ENCODE measurements at regions of chr2 and their contacts with region 1.

Region 1: GRCh38 chr2:217886720-217887309 is 116.0 kb downstream of the TNS1 start:
- DNase-seq: no peak
- H3K4me3 ChIP-seq: no peak overlapping the region
- H3K27ac ChIP-seq: peak overlapping the region; percentile 89 to 98 (median 97)
- H3K4me1 ChIP-seq: peaks cover 58 to 88% (median 83%) of the 10 kb centered on the region in 4 donors
- H3K27me3 ChIP-seq: no peaks in the 10 kb centered on the region
- CTCF ChIP-seq: peak; percentile 73 to 79 (median 75)
- EP300 ChIP-seq: no peak
- POLR2A ChIP-seq: no peak

Region 2: GRCh38 chr2:216412022-216412999 is 1474.5 kb before region 1 on chr2 and contains the start of gene SMARCAL1:
- intact Hi-C with region 1: no loop called
- DNase-seq: peak; percentile 100
- H3K4me3 ChIP-seq: peak within 1 kb of the TSS; percentile 65 to 81 (median 77)
- H3K27ac ChIP-seq: peak within 1 kb of the TSS; percentile 87 to 96 (median 92)
- H3K4me1 ChIP-seq: peaks cover 0 to 14% (median 10%) of the 10 kb centered on the region in 4 donors
- H3K27me3 ChIP-seq: peaks cover 0 to 8% (median 0%) of the 10 kb centered on the region in 4 donors
- CTCF ChIP-seq: peak in 1 of 3 experiments; percentile 8
- EP300 ChIP-seq: no peak
- POLR2A ChIP-seq: no peak
- total RNA-seq, gene SMARCAL1: 6.3 to 15.8 (median 11.6) TPM

Region 3: DNA sequence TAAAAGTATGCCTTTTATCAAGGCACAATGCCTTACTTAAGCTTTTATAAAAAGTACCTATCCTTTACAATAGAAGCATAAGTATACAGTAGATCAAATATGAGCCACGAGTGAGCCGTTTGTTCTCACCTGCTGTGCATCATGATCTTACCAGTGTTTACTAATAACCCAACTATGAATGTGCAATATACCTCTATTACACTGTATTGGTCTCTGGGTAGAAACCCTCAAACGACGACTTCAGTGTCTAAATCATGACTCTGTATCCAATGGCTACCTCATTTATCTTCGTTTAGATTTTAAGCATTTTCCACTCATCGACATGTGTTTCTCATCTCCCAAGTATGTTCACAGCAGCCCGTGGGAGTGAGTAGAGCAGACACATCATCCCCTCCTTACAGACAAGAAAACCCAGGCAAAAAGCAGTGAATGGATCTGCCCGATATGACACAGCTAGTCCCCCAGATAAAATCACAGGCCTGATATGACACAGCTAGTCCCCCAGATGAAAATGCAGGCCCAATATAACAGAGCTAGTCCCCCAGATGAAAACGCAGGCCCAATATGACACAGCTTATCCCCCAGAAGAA is 163.8 kb before region 1 on chr2:
- intact Hi-C with region 1: no loop called
- DNase-seq: no peak
- H3K4me3 ChIP-seq: no peak overlapping the region
- H3K27ac ChIP-seq: no peak overlapping the region
- H3K4me1 ChIP-seq: no peaks in the 10 kb centered on the region
- H3K27me3 ChIP-seq: no peaks in the 10 kb centered on the region
- CTCF ChIP-seq: no peak
- EP300 ChIP-seq: no peak
- POLR2A ChIP-seq: no peak

Region 4: DNA sequence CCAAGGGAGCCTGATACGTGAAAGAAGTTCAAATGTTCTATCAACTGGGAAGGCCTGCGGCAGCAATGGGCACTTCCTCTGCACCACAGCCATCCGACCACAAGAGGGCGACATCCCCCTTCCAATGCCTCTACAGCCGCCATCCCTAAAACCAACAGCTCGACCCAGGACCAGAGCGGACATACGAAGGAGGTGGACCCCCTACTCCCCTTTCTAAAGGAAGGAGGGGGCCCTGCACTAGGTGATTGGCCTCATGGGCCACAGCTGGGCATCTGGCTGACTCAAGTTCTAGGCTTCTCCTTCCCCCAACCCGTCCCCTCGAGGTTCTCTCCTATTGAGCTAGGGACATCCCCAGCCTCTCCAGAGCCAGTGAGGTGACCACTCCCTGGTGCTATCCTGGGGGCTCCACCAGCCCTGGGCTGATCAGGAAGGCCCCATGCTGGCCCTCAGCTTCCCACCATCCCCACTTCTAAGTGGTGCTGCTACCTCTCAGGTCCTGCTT is 101.2 kb before region 1 on chr2:
- intact Hi-C with region 1: loop called (anchors 5 kb)
- DNase-seq: peak; percentile 97
- H3K4me3 ChIP-seq: no peak overlapping the region
- H3K27ac ChIP-seq: peak overlapping the region; percentile 45 to 65 (median 60)
- H3K4me1 ChIP-seq: peaks cover 10 to 35% (median 20%) of the 10 kb centered on the region in 4 donors
- H3K27me3 ChIP-seq: no peaks in the 10 kb centered on the region
- CTCF ChIP-seq: peak; percentile 96 to 99 (median 96)
- EP300 ChIP-seq: no peak
- POLR2A ChIP-seq: no peak

Region 5: GRCh38 chr2:217964275-217965161 is 77.7 kb after region 1 on chr2:
- intact Hi-C with region 1: no loop called
- DNase-seq: no peak
- H3K4me3 ChIP-seq: peak overlapping the region; percentile 1 to 27 (median 20)
- H3K27ac ChIP-seq: peak overlapping the region; percentile 87 to 97 (median 93)
- H3K4me1 ChIP-seq: peaks cover 57 to 97% (median 87%) of the 10 kb centered on the region in 4 donors
- H3K27me3 ChIP-seq: no peaks in the 10 kb centered on the region
- CTCF ChIP-seq: no peak
- EP300 ChIP-seq: no peak
- POLR2A ChIP-seq: no peak